A673 (cell line): ENCODE measurements at regions of chr1 and their contacts with region 1.

Region 1: DNA sequence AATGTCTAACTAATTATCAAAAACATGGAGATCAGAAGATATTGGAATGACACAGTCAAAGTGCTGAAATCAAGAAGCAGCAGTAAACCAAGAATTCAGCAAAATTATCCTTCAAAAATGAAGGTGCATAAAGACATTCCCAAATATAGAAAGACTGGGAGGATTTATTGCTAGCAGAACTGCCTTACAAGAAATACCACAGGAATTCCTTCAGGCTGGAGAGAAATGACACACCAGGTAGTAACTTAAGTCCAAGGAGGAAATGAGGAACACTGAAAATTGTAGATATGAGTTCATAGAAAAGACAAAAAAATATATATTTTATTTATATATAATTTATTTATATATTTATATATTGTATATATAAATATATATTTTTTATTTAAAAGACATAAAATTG is 217.2 kb downstream of the RPS6KC1 start:
- DNase-seq: no peak
- H3K4me3 ChIP-seq: no peak overlapping the region
- H3K27ac ChIP-seq: no peak overlapping the region
- H3K4me1 ChIP-seq: no peaks in the 10 kb centered on the region
- H3K27me3 ChIP-seq: no peaks in the 10 kb centered on the region
- CTCF ChIP-seq: no peak

Region 2: GRCh38 chr1:214303141-214303930 is 1035.1 kb after region 1 on chr1:
- CTCF ChIA-PET with region 1: no interaction called
- POLR2A ChIA-PET with region 1: no interaction called
- intact Hi-C with region 1: loop called (anchors 10 kb)
- DNase-seq: no peak
- H3K4me3 ChIP-seq: no peak overlapping the region
- H3K27ac ChIP-seq: no peak overlapping the region
- H3K4me1 ChIP-seq: peaks cover 5% of the 10 kb centered on the region
- H3K27me3 ChIP-seq: no peaks in the 10 kb centered on the region
- CTCF ChIP-seq: no peak